Colonic mucosa (tissue), 4 donors: ENCODE measurements at regions of chr5 and their contacts with region 1.

Region 1: GRCh38 chr5:36264202-36264760 is 22.6 kb upstream of the NADK2 start:
- DNase-seq: no peak
- H3K4me3 ChIP-seq: no peak overlapping the region
- H3K27ac ChIP-seq: no peak overlapping the region
- H3K4me1 ChIP-seq: no peaks in the 10 kb centered on the region
- H3K27me3 ChIP-seq: no peaks in the 10 kb centered on the region
- CTCF ChIP-seq: no peak

Region 2: GRCh38 chr5:36507332-36507952 is 243.2 kb after region 1 on chr5:
- intact Hi-C with region 1: loop called (anchors 10 kb)
- DNase-seq: peak; percentile 71
- H3K4me3 ChIP-seq: no peak overlapping the region
- H3K27ac ChIP-seq: no peak overlapping the region
- H3K4me1 ChIP-seq: no peaks in the 10 kb centered on the region
- H3K27me3 ChIP-seq: no peaks in the 10 kb centered on the region
- CTCF ChIP-seq: peak; percentile 75

Region 3: GRCh38 chr5:36690041-36690961 is 426.0 kb after region 1 on chr5:
- intact Hi-C with region 1: loop called (anchors 10 kb)
- DNase-seq: peak; percentile 76
- H3K4me3 ChIP-seq: peak overlapping the region; percentile 52
- H3K27ac ChIP-seq: peak overlapping the region; percentile 36
- H3K4me1 ChIP-seq: no peaks in the 10 kb centered on the region
- H3K27me3 ChIP-seq: no peaks in the 10 kb centered on the region
- CTCF ChIP-seq: peak; percentile 71